HCT116 (cell line): ENCODE measurements at regions of chr3 and their contacts with region 1.

Region 1: DNA sequence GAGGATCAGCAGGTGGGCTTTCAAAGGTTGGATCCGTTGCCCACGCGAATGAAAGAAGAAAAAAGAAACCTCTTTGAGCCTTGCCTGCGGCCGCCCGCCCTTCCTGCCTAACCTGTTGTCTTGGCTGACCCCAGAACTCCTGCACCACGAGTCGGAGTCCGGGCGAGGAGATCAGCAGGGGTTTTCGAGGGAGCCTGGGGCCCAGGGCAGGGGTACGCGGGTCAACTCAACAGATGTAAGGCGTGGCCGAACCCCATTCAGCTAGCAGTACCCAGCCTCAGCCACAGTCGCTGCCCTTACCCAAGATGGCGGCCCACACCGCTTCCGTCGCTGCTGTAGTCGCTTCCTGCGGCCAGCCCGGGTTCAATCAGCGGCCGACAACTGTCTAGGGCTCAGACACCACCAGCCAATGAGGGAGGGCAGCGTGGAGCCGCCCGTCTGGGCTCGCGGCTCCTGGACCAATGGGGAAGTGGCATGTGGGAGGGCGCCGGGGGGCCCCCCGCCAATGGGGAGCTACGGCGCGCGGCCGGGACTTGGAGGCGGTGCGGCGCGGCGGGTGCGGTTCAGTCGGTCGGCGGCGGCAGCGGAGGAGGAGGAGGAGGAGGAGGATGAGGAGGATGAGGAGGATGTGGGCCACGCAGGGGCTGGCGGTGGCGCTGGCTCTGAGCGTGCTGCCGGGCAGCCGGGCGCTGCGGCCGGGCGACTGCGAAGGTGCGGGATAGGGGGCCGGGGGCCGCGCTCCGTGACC is at the start of gene MANF:
- DNase-seq: peak; percentile 95
- ATAC-seq: peak; percentile 93
- H3K4me3 ChIP-seq: peak within 1 kb of the TSS; percentile 97 to 99
- H3K27ac ChIP-seq: peak within 1 kb of the TSS; percentile 86
- H3K4me1 ChIP-seq: peaks cover 15 to 39% of the 10 kb centered on the region in 2 experiments; a peak in 3 of 4 replicates
- H3K27me3 ChIP-seq: no peaks in the 10 kb centered on the region
- CTCF ChIP-seq: no peak
- POLR2A ChIP-seq: peak; percentile 39
- RAD21 ChIP-seq: no peak
- total RNA-seq, gene MANF: 132 TPM

Region 2: DNA sequence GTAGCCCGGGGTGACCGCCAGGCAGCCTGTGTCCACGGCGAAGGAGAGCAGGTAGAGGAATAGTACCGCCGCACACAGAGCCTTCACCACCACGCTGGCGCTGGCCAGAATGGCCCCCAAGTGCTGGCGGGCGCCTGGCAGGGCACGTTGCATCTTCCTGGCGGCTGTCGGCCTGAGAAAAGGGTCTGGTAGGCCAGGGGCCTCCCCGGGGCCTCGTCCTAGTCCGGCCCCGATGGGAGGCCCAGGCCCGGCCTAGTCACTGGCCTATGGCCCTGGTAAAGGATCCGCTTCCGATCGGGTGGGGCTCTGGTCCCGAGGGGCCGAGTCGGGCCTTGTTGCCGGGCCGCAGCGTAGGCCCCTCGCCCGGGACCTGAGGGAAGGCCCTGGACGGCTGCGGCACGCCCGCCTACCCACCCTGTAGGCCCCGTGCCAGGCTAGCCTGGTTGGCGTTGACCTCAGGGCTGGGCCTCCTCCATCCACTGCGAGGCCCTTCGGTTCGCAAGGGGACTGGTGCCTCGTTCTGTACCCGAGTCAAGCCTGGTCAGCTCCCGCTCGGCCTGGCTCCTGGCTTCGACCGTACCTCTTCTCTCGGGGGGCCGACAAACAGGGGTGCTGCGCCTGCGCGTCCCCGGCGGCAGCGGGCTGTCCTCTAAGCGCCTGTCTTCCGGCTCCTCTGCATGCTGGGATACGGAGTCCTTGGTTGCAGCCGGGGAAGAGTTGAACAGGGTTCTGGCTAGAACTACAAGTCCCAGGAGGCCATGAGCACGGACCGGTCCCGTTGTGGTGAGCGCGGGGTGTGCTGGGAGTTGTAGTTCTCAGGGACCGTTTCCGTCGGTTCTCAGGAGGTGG is 1025.8 kb before region 1 on chr3 and contains the start of gene TMEM115:
- CTCF ChIA-PET with region 1: no interaction called
- POLR2A ChIA-PET with region 1: no interaction called
- RAD21 ChIA-PET with region 1: no interaction called
- intact Hi-C with region 1: loop called (anchors 10 kb)
- DNase-seq: peak; percentile 96
- ATAC-seq: peak; percentile 99
- H3K4me3 ChIP-seq: peak within 1 kb of the TSS; percentile 83 to 87
- H3K27ac ChIP-seq: peak within 1 kb of the TSS; percentile 82
- H3K4me1 ChIP-seq: peaks cover 9 to 36% of the 10 kb centered on the region in 2 experiments; a peak in 3 of 4 replicates
- H3K27me3 ChIP-seq: no peaks in the 10 kb centered on the region
- CTCF ChIP-seq: no peak
- POLR2A ChIP-seq: no peak
- RAD21 ChIP-seq: no peak
- total RNA-seq, gene TMEM115: 24.6 TPM

Region 3: DNA sequence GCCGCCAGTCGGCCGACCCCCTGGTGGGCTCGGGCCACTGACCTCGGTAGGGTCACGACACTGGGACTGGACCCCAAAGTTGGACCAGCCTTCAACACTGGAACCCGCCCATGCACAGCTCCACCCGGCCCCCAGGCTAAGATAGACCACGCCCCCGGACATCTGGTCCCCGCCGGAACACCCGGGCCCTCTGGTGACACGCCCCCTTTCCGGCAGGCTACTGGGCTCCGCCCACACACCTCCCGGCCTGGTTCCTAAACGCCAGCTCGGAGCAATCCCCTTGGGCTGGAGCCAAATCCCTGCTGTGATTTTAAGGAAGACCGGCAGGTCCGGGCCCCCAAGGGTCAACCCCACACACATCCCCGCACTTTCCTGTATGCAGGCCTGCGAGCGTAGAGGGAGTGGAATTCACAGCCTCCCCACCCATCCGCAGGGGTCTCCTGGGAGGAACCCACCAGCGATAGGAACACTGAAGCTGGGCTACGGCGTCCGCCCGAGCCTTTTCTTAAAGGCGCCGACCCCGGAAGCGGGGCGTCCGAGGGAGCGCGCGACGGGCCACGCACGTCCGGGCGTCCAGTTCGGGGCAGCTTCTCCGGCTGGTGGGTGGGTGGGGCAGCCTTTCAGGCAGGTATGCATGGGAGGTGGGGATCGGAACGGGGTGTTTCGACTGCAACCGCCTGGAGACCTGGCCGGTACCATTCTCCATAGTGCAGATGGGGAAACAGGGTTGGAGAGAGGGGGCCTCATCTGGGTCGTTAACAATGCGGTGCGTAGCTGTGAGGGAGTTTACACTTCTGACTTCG is 815.8 kb before region 1 on chr3 and contains the start of gene HEMK1:
- CTCF ChIA-PET with region 1: no interaction called
- POLR2A ChIA-PET with region 1: no interaction called
- RAD21 ChIA-PET with region 1: no interaction called
- intact Hi-C with region 1: loop called (anchors 5 kb)
- DNase-seq: peak; percentile 94
- ATAC-seq: peak; percentile 79
- H3K4me3 ChIP-seq: peak within 1 kb of the TSS; percentile 90 to 99
- H3K27ac ChIP-seq: peak within 1 kb of the TSS; percentile 54
- H3K4me1 ChIP-seq: peaks cover 15 to 40% of the 10 kb centered on the region in 2 experiments
- H3K27me3 ChIP-seq: no peaks in the 10 kb centered on the region
- CTCF ChIP-seq: no peak
- POLR2A ChIP-seq: no peak
- RAD21 ChIP-seq: no peak
- total RNA-seq, gene HEMK1: 20.5 TPM

Region 4: GRCh38 chr3:50971487-50971924 is 413.4 kb before region 1 on chr3:
- CTCF ChIA-PET with region 1: no interaction called
- POLR2A ChIA-PET with region 1: no interaction called
- RAD21 ChIA-PET with region 1: no interaction called
- intact Hi-C with region 1: loop called (anchors 5 kb)
- DNase-seq: peak; percentile 73
- ATAC-seq: peak; percentile 96
- H3K4me3 ChIP-seq: no peak overlapping the region
- H3K27ac ChIP-seq: no peak overlapping the region
- H3K4me1 ChIP-seq: peaks cover 0 to 3% of the 10 kb centered on the region in 2 experiments; a peak in 1 of 4 replicates
- H3K27me3 ChIP-seq: no peaks in the 10 kb centered on the region
- CTCF ChIP-seq: peak; percentile 88 to 99 (median 96)
- POLR2A ChIP-seq: no peak
- RAD21 ChIP-seq: peak; percentile 94

Region 5: GRCh38 chr3:51498876-51499738 is 114.2 kb after region 1 on chr3:
- CTCF ChIA-PET with region 1: interaction called, 5 read pairs
- POLR2A ChIA-PET with region 1: interaction called, 3 read pairs
- RAD21 ChIA-PET with region 1: no interaction called
- intact Hi-C with region 1: loop called (anchors 5 kb)
- DNase-seq: peak; percentile 84
- ATAC-seq: peak; percentile 81
- H3K4me3 ChIP-seq: peak overlapping the region; percentile 62 to 72
- H3K27ac ChIP-seq: peak overlapping the region; percentile 89
- H3K4me1 ChIP-seq: peaks cover 10 to 17% of the 10 kb centered on the region in 2 experiments; a peak in 3 of 4 replicates
- H3K27me3 ChIP-seq: no peaks in the 10 kb centered on the region
- CTCF ChIP-seq: no peak
- POLR2A ChIP-seq: peak; percentile 9
- RAD21 ChIP-seq: no peak

Region 6: GRCh38 chr3:51941798-51942602 is 557.1 kb after region 1 on chr3 and contains the starts of genes PARP3 and RRP9:
- CTCF ChIA-PET with region 1: no interaction called
- POLR2A ChIA-PET with region 1: no interaction called
- RAD21 ChIA-PET with region 1: no interaction called
- intact Hi-C with region 1: no loop called
- DNase-seq: peak; percentile 99
- ATAC-seq: peak; percentile 89
- H3K4me3 ChIP-seq: peak within 1 kb of the TSS; percentile 82 to 89
- H3K27ac ChIP-seq: peak within 1 kb of the TSS; percentile 96
- H3K4me1 ChIP-seq: peaks cover 23 to 29% of the 10 kb centered on the region in 2 experiments
- H3K27me3 ChIP-seq: no peaks in the 10 kb centered on the region
- CTCF ChIP-seq: peak in 2 of 3 experiments; percentile 95 to 99; a peak in 4 of 6 replicates
- POLR2A ChIP-seq: no peak
- RAD21 ChIP-seq: no peak
- total RNA-seq, gene PARP3: 17.5 TPM
- total RNA-seq, gene RRP9: 71.3 TPM